Activated T-helper 1 cell treated with anti-CD3 and anti-CD28 coated beads, Interleukin-12 subunit alpha, Interleukin-12 subunit beta, Interleukin-2, Interleukin-4 antibody, amounts not matched to agents 30 ng/mL and 10 ng/mL and 1 ng/mL, durations not matched to agents 14 hours and 24 hours and 36 hours (primary cell): ENCODE measurements at regions of chr9 and their contacts with region 1.

Region 1: GRCh38 chr9:113376634-113377567 is at the start of gene HDHD3:
- DNase-seq: peak; percentile 78
- H3K4me3 Mint-ChIP-seq: peak within 1 kb of the TSS; percentile 83
- H3K27ac Mint-ChIP-seq: peak within 1 kb of the TSS; percentile 71
- H3K4me1 Mint-ChIP-seq: peaks cover 18% of the 10 kb centered on the region
- H3K27me3 Mint-ChIP-seq: no peaks in the 10 kb centered on the region
- total RNA-seq, gene HDHD3: 15.7 and 18.5 TPM in 2 replicates

Region 2: DNA sequence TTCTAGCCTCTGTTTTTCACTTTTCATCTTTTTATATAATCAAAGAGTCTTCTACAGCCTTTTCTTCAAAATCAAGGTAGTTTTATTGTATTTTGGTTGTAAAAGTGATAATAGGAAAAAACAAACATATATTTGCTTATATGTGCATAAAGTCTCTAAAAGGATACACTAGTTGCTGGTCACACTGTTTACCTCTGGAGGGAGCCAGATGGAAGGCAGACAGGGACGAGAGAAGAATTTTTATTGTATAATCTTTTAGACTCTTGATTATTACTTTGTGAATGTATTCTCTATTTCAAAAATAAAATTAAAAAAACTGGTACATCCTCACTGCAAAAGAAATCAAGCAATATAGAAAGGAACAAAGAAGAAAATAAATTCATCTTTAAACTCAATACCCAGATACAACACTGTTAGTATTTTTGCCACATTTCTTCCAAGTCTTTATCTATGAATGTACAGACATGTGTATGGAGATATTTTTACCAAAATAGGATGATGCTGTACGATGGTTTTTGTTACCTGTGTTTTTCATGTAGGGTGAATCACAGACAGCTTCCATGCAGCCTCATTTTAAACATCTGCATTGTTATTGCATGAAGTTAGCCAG is 67.6 kb before region 1 on chr9:
- intact Hi-C with region 1: loop called (anchors 2 kb)
- DNase-seq: peak; percentile 10
- H3K4me3 Mint-ChIP-seq: no peak overlapping the region
- H3K27ac Mint-ChIP-seq: no peak overlapping the region
- H3K4me1 Mint-ChIP-seq: no peaks in the 10 kb centered on the region
- H3K27me3 Mint-ChIP-seq: peaks cover 8% of the 10 kb centered on the region

Region 3: DNA sequence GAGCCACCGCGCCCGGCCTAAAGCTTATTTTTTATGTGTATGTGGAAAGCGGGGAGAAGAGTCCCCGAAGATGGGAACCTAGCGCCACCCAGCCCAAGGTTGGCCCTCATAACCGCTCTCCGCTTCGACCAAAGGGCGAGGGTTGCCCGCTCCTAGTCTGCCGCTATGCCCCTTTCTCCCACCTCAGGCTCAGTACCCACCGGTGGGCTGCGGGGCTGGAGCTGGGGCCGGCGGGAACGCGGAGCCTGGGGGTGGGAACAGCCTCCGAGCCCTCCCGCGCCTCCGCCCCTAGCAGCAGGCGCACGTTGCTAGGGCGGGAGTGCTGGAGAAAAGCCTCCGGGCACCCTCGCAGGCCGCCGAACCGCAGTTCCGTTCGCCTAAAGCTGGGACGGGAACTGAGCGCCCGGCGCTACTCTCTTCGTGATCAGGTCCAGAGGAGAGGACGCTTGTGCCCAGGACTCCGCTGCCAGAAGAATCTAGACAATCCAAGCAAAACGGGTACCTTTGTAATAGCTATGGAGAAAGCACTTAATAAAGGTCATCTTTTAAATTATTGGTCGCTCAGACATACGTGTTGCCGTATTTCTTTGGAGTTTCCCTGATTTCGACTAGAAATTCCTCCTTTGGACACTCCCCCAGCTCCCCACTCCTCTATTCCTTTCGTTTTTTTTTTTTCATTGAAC is 36.7 kb before region 1 on chr9 and contains the start of gene WDR31:
- intact Hi-C with region 1: loop called (anchors 1 kb)
- DNase-seq: peak; percentile 78
- H3K4me3 Mint-ChIP-seq: peak within 1 kb of the TSS; percentile 80
- H3K27ac Mint-ChIP-seq: peak within 1 kb of the TSS; percentile 89
- H3K4me1 Mint-ChIP-seq: peaks cover 49% of the 10 kb centered on the region
- H3K27me3 Mint-ChIP-seq: no peaks in the 10 kb centered on the region
- total RNA-seq, gene WDR31: 1.9 and 2.2 TPM in 2 replicates

Region 4: GRCh38 chr9:113349445-113350094 is 27.3 kb before region 1 on chr9 and contains the start of gene BSPRY:
- intact Hi-C with region 1: loop called (anchors 1 kb)
- DNase-seq: peak; percentile 51
- H3K4me3 Mint-ChIP-seq: peak within 1 kb of the TSS; percentile 93
- H3K27ac Mint-ChIP-seq: peak within 1 kb of the TSS; percentile 92
- H3K4me1 Mint-ChIP-seq: peaks cover 68% of the 10 kb centered on the region
- H3K27me3 Mint-ChIP-seq: no peaks in the 10 kb centered on the region
- total RNA-seq, gene BSPRY: 12.3 and 12.8 TPM in 2 replicates

Region 5: DNA sequence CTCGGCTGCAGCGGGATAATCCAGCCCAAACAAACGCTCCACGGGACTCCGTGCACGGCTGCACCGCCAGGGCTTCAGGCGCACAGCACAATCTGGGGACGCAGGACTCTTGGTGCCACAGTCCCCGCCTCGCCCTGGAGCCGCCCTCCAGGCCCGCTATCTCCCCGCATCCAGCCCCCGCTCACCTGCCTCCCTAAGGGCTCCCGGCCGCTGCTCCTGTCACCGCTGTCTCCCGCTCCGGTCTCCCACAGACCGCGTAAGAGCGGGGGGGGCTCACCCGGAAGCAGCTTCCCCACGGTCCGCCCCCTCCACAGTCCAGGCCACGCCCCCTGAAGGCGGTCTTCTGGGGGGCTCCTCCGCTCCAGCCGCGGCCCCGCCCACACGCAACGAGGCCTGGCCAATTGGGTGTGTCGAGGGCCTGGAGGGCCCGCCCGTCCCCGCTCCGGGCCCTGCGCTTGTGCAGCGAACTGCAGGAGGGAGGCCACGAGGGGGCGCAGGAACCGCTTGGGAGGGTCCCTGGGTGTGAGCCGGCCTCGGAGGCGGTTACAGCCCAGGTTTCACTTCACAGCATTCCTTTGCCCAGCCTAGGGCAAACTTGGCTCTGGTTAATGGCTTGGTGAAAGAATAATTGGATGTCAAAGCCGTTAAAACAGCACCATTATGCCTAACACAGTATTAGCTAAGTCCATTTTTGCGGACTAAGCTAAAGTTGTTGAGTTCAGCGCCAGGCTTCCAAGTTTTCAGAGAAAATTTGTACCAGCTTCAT is 24.3 kb after region 1 on chr9 and contains the start of gene ALAD:
- intact Hi-C with region 1: loop called (anchors 1 kb)
- DNase-seq: peak; percentile 99
- H3K4me3 Mint-ChIP-seq: peak within 1 kb of the TSS; percentile 89
- H3K27ac Mint-ChIP-seq: peak within 1 kb of the TSS; percentile 67
- H3K4me1 Mint-ChIP-seq: peaks cover 25% of the 10 kb centered on the region
- H3K27me3 Mint-ChIP-seq: no peaks in the 10 kb centered on the region
- total RNA-seq, gene ALAD: 23.0 and 23.7 TPM in 2 replicates

Region 6: DNA sequence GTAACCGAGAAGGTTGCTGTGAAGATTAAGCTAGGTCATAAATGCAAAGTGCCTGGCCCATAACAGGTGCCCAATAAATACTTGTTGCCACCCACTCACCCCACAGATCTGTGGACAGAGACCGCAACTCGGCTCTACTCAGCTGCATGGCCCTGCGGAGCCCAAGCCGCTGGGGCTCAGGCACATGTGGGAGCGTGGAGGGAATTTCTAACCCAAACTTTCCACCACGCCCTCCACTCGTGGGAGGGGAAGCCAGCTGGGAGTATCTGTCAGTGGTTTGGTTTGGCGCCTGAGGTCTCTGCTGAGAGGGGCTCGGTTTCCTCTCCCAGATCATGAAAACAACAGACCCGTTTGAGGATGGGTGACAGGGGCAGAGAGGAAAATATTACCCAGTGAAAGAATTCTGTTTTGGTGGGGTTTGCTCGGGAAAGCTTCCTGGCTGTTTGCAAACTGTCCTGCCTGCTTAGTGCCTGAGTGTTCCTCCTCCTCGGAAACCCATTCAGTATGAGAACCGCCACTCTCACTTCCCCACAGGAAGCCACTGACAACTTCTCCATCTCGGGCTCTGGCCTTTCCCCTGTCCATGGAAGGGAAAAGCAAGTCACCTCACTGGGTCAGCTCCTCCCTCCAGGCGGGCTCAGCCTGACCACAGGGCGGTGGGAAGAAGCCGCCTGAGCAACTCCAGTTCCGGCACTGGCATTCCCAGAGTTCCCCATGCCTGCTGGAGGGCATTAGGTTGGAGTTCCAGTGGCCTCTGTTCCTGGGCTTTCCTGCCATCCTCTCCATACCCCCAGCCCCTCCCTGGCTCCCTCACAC is 146.7 kb after region 1 on chr9:
- intact Hi-C with region 1: no loop called
- DNase-seq: peak; percentile 54
- H3K4me3 Mint-ChIP-seq: peak overlapping the region; percentile 77
- H3K27ac Mint-ChIP-seq: peak overlapping the region; percentile 86
- H3K4me1 Mint-ChIP-seq: peaks cover 85% of the 10 kb centered on the region
- H3K27me3 Mint-ChIP-seq: peaks cover 2% of the 10 kb centered on the region